ENCODE measurements at regions of chr12 and their contacts with region 1.

Region 1: DNA sequence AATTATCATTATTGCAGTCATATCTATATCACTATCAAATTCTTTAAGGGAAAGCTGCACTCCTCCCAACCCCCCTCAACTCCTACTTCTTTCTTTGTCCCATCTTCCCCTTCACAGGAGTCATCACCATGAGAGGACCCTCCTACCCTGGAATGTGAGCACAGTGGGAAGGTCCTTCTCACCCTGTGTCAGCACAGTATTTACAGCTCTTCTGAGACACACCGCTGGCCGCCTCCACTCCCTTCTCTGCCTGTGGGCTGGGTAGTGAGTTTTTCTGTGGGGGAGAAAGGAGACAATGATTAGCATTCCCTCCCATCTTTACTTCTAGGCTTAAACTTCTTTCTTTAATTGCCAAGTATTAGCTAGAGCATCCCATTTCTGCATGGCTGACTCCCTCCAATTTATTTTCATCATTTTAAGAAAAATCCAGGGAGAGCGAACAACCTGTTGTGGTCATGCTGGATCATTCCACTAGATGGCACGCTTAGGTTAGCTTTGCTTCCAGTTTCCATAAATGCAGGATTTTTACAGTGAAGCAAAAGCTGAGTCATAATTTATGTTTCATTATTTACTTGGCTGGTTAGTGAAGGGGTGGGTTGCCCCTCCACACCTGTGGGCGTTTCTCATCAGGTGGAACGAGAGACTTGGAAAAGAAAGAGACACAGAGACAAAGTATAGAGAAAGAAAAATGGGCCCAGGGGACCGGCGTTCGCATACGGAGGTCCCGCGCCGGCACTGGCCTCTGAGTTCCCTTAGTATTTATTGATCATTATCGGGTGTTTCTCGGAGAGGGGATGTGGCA is 188.5 kb downstream of the ALX1 start:
- DNase-seq: peak; percentile 70
- H3K4me3 Mint-ChIP-seq: peak overlapping the region; percentile 71
- H3K27ac Mint-ChIP-seq: peak overlapping the region; percentile 79
- H3K4me1 Mint-ChIP-seq: peaks cover 47% of the 10 kb centered on the region
- H3K27me3 Mint-ChIP-seq: no peaks in the 10 kb centered on the region
- CTCF ChIP-seq: peak; percentile 55

Region 2: DNA sequence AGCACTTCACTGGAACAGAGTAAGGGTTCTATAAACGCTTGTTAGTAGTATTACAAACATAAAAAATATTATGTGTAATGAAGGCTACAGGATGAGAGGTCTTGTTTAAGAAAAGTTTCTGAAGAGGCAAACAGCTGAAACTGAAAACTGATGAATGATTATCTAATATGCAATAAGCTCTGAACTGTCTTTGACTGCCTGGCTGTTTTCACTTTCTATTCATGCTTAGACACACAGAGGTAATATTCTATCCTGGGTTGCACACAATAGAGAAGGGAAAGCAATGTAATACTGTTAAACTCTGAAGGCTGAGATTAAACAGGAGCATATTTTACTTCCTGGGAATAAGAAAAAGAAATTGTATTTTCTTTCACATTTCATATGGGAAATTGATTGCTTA is 62.8 kb after region 1 on chr12:
- CTCF ChIA-PET with region 1: no interaction called
- intact Hi-C with region 1: no loop called
- DNase-seq: no peak
- H3K4me3 Mint-ChIP-seq: no peak overlapping the region
- H3K27ac Mint-ChIP-seq: no peak overlapping the region
- H3K4me1 Mint-ChIP-seq: no peaks in the 10 kb centered on the region
- H3K27me3 Mint-ChIP-seq: no peaks in the 10 kb centered on the region
- CTCF ChIP-seq: no peak

Region 3: DNA sequence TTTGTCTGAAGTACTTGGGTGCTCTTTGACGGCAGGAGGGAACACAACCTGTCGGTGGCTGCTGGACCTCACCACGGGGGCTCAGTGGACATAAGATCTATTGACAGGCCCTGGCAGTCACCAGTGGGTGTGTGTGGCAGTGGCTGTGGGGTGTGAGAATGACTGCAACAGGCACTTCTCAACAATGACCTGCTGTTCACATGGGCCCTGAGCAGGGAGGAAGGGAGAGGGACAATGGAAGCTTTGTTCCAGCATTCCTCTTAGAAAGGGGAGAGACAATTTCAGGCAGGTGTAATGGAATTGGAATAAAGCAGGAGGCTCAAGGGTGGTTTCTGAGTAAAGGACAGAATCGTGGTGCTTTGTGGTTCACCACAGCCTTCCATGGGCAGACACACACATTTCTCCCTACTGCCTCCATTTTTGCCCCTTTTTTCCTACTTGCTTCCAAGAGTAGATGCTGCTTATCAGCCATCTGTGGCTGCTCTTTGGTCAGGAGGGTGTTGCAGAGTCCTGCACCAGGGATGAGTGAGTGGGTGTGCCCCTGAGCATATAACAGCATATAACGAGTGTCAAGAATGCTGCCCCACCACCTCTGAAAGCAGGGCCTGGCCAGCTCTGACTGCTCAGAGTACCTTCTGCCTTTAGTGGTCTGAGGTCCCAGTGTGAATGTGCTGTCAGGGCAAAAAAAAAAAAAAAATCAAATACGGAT is 100.0 kb after region 1 on chr12:
- CTCF ChIA-PET with region 1: no interaction called
- intact Hi-C with region 1: loop called (anchors 5 kb)
- DNase-seq: peak; percentile 70
- H3K4me3 Mint-ChIP-seq: no peak overlapping the region
- H3K27ac Mint-ChIP-seq: peak overlapping the region; percentile 85
- H3K4me1 Mint-ChIP-seq: peaks cover 20% of the 10 kb centered on the region
- H3K27me3 Mint-ChIP-seq: no peaks in the 10 kb centered on the region
- CTCF ChIP-seq: no peak

Region 4: DNA sequence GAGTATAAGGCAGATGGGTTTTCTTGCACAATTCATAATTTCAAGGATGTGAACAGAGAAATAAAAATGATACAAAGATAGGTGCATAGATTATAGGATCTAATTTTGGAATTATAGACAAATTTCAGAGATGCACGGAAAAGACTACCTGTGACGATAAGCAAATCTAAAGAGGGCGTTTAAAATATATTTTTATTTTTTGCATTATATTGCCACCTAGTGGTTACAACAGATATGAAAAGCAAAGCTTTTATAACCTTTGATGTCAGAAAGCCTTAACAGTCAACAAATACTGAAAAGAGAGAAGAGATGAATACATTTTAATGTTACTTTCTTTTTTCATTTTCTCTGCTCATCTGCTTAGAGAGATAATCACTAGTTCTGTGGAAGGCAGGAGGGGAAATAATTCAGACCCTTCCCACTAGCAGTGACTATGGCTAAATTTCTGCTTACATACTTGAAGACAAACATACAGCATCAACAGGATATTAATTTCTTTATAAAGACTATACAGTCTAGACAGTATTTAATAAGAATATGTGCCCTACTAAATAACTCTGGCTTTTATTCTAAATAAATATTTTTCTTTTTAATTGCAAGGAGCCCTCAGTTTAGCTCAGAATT is 451.9 kb after region 1 on chr12:
- CTCF ChIA-PET with region 1: interaction called, 18 read pairs
- intact Hi-C with region 1: loop called (anchors 1 kb)
- DNase-seq: no peak
- H3K4me3 Mint-ChIP-seq: no peak overlapping the region
- H3K27ac Mint-ChIP-seq: no peak overlapping the region
- H3K4me1 Mint-ChIP-seq: no peaks in the 10 kb centered on the region
- H3K27me3 Mint-ChIP-seq: no peaks in the 10 kb centered on the region
- CTCF ChIP-seq: peak; percentile 45